Heart right ventricle (tissue), 16 donors: ENCODE measurements at regions of chr16 and their contacts with region 1.

Region 1: DNA sequence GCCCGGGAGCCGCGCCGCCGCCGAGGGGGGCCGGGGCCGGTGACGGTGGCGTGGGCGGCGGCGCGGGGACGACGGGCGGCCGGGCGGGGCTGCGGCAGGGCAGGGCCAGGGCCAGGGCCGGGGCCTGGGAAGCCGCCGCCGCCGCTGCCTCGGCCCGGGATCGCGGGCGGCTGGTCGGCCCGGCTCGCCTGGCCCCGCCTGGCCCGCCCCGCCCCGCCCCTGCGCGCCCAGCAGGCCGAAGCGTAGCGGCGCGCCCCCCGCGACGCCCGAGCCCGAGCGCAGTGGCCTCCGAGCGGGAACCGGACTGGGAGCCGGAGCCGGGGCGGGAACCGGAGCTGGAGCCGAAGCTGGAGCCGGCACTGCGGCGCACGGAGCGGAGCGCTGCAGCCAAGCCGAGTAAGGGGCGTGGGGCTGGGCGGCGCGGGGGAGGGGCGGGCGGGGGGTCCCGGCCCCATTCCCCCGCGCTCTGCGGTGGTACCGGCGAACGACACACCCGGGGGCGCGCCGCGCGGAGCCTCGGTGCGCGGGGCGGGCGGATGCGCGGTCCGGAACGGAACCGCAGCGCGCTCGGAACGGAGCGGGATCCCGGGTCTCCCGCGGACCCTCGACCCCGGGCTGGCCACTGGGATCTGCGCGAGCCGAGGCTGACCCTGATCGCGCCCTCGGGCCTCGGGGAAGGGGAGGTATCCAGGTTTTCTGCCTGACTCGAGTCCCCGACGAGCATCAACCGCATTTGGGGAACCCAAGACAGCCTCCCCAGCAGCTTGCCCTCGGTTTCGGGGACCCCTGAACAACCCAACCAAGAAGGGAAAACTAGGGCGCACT is at the start of gene BEAN1:
- DNase-seq: peak in 1 of 2 donors; percentile 40
- ATAC-seq: peak in 7 of 8 donors; percentile 18 to 77 (median 59)
- H3K4me3 ChIP-seq: peak within 1 kb of the TSS; percentile 16 to 70 (median 54)
- H3K27ac ChIP-seq: peak within 1 kb of the TSS in 1 of 10 donors; percentile 9
- H3K4me1 ChIP-seq: peaks cover 2 to 24% (median 18%) of the 10 kb centered on the region in 9 donors
- H3K27me3 ChIP-seq: peaks cover 0 to 55% (median 20%) of the 10 kb centered on the region in 7 donors
- CTCF ChIP-seq: peak in 1 of 9 donors; percentile 6
- total RNA-seq, gene BEAN1: 0.26 to 9.6 (median 2.0) TPM

Region 2: GRCh38 chr16:66469291-66469946 is 42.2 kb after region 1 on chr16:
- intact Hi-C with region 1: loop called in 1 of 10 experiments (anchors 5 kb)
- DNase-seq: no peak
- ATAC-seq: no peak
- H3K4me3 ChIP-seq: no peak overlapping the region
- H3K27ac ChIP-seq: no peak overlapping the region
- H3K4me1 ChIP-seq: no peaks in the 10 kb centered on the region
- H3K27me3 ChIP-seq: peaks cover 0 to under 1% (median 0%) of the 10 kb centered on the region in 7 donors
- CTCF ChIP-seq: no peak